ENCODE measurements at regions of chr3 and their contacts with region 1.

Region 1: DNA sequence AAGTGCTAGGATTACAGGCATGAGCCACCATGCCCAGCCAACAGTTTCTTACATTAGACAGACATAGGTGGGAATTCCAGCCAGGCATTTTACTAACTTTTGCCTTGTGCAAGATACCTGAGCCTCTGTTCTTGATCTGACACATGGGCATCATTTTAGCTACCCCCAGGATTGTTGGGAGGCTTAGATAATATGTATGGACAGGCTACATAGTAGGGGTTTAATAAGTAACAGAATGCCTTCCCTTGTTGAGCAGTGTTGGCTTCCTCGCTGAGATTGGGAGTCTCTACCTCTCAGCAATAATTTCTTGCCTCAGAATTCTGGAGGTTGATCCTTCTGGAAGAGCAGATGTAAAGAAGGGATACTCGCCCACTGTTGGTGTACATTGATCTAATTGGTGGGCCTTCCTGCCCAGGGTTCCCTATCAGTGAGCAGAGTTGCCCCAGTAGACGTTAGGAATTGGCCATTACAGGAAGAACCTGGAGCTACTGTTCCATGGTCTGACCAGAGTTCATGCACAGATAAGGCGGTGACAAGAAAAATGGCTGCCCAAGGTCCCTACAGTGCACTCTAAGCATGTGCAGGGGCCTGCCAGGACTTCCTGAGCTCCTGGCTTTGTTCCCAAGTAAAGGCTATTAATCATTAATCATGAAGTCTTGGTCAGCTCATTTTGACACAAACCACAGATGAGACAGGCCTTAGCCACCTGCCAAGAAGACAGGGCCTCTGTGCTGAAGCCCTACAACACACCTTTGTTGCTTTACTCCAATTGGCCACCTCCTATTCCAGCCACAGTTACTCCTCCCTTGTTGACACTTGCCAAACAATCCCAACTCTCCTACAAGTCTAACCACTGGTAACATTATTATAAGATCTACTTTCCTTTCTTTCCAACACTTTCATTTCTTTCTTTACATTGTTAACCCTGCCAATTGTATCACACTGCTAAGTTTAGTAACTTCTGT is 5.0 kb upstream of the IL17RE start:
- DNase-seq: peak; percentile 80
- H3K4me3 Mint-ChIP-seq: peak overlapping the region; percentile 52
- H3K27ac Mint-ChIP-seq: peak overlapping the region; percentile 66
- H3K4me1 Mint-ChIP-seq: peaks cover 65% of the 10 kb centered on the region
- H3K27me3 Mint-ChIP-seq: no peaks in the 10 kb centered on the region
- CTCF ChIP-seq: no peak

Region 2: GRCh38 chr3:9846231-9846630 is 51.5 kb before region 1 on chr3:
- CTCF ChIA-PET with region 1: no interaction called
- intact Hi-C with region 1: loop called (anchors 5 kb)
- DNase-seq: no peak
- H3K4me3 Mint-ChIP-seq: no peak overlapping the region
- H3K27ac Mint-ChIP-seq: no peak overlapping the region
- H3K4me1 Mint-ChIP-seq: peaks cover 18% of the 10 kb centered on the region
- H3K27me3 Mint-ChIP-seq: peaks cover 2% of the 10 kb centered on the region
- CTCF ChIP-seq: no peak

Region 3: GRCh38 chr3:9862391-9863057 is 35.2 kb before region 1 on chr3:
- CTCF ChIA-PET with region 1: interaction called, 3 read pairs
- intact Hi-C with region 1: loop called (anchors 5 kb)
- DNase-seq: peak; percentile 76
- H3K4me3 Mint-ChIP-seq: peak overlapping the region; percentile 21
- H3K27ac Mint-ChIP-seq: no peak overlapping the region
- H3K4me1 Mint-ChIP-seq: no peaks in the 10 kb centered on the region
- H3K27me3 Mint-ChIP-seq: no peaks in the 10 kb centered on the region
- CTCF ChIP-seq: peak; percentile 18

Region 4: DNA sequence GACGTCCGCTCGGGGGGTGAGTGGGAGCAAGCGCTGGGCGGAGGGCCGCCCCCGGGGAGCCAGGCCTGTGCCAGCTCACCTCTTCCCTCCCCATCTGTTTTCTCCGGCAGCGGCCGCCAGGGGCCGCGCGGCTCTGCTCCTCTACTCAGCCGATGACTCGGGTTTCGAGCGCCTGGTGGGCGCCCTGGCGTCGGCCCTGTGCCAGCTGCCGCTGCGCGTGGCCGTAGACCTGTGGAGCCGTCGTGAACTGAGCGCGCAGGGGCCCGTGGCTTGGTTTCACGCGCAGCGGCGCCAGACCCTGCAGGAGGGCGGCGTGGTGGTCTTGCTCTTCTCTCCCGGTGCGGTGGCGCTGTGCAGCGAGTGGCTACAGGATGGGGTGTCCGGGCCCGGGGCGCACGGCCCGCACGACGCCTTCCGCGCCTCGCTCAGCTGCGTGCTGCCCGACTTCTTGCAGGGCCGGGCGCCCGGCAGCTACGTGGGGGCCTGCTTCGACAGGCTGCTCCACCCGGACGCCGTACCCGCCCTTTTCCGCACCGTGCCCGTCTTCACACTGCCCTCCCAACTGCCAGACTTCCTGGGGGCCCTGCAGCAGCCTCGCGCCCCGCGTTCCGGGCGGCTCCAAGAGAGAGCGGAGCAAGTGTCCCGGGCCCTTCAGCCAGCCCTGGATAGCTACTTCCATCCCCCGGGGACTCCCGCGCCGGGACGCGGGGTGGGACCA is 35.3 kb after region 1 on chr3:
- CTCF ChIA-PET with region 1: interaction called, 10 read pairs
- intact Hi-C with region 1: loop called (anchors 2 kb)
- DNase-seq: peak; percentile 84
- H3K4me3 Mint-ChIP-seq: peak overlapping the region; percentile 93
- H3K27ac Mint-ChIP-seq: peak overlapping the region; percentile 95
- H3K4me1 Mint-ChIP-seq: peaks cover 15% of the 10 kb centered on the region
- H3K27me3 Mint-ChIP-seq: no peaks in the 10 kb centered on the region
- CTCF ChIP-seq: peak; percentile 38

Region 5: GRCh38 chr3:10273702-10274305 is 376.1 kb after region 1 on chr3:
- CTCF ChIA-PET with region 1: no interaction called
- intact Hi-C with region 1: no loop called
- DNase-seq: no peak
- H3K4me3 Mint-ChIP-seq: no peak overlapping the region
- H3K27ac Mint-ChIP-seq: no peak overlapping the region
- H3K4me1 Mint-ChIP-seq: peaks cover 19% of the 10 kb centered on the region
- H3K27me3 Mint-ChIP-seq: no peaks in the 10 kb centered on the region
- CTCF ChIP-seq: no peak